ENCODE measurements at regions of chr16 and their contacts with region 1.

Region 1: DNA sequence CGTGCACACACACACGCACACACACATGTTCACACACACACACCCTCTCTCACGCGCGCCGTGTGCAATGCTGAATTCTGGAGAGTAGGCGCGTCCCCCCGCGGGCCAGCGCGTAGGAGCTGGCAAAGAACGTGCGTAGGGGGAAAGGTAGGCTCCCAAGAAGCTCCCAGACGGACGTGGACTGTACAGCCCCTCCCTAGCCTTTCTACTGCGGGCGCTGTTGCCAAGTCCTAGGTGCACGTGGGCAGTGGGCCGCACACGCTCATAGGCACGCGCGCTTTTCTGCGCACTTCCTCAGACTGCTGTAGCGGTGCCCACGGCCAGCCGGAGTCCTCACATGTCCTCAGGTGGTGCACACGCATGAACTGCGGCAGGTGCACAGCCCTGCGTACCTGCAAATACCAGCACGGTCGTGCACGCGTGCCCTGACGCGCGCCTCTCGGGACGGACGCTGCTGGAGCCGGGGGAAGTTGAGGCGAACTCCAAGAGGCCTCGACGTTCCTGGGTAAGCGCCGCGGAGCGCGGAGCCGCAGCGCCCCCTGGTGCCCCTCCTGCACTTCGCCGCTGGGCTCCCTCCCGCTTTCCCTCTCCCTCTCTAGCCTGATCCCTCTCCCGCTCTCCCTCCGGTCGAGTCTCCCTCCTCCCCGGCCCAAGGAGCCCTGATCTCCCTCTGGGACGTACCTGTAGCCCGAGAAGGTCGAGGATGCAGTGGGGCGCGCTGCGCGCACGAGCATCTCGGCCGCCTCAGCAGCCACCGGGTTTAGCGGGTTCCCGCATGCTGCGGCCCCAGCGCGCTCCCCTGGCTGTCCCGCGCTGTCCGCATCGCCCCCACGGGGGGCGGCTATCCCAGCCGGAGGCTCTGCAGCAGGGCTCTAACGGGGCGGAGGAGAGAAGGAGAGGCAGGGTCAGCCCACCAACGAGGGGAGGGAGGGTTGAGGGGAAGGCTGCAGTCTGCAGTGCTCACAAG is 749 bp downstream of the GRIN2A start:
- DNase-seq: peak; percentile 82
- H3K4me3 Mint-ChIP-seq: peak overlapping the region; percentile 42
- H3K27ac Mint-ChIP-seq: no peak overlapping the region
- H3K4me1 Mint-ChIP-seq: peaks cover 5% of the 10 kb centered on the region
- H3K27me3 Mint-ChIP-seq: peaks cover 38% of the 10 kb centered on the region

Region 2: GRCh38 chr16:9159839-9160550 is 1021.5 kb before region 1 on chr16:
- intact Hi-C with region 1: loop called (anchors 2 kb)
- DNase-seq: peak; percentile 90
- H3K4me3 Mint-ChIP-seq: no peak overlapping the region
- H3K27ac Mint-ChIP-seq: no peak overlapping the region
- H3K4me1 Mint-ChIP-seq: peaks cover 8% of the 10 kb centered on the region
- H3K27me3 Mint-ChIP-seq: peaks cover 6% of the 10 kb centered on the region

Measured in activated CD4-positive, alpha-beta T cell treated with anti-CD3 and anti-CD28 coated beads, Interleukin-2, amount 10 ng/mL, durations not matched to agents 24 days and 14 days (primary cell).